Activated CD4-positive, alpha-beta memory T cell treated with anti-CD3 and anti-CD28 coated beads for 36 hours (primary cell): ENCODE measurements at regions of chr4 and their contacts with region 1.

Region 1: DNA sequence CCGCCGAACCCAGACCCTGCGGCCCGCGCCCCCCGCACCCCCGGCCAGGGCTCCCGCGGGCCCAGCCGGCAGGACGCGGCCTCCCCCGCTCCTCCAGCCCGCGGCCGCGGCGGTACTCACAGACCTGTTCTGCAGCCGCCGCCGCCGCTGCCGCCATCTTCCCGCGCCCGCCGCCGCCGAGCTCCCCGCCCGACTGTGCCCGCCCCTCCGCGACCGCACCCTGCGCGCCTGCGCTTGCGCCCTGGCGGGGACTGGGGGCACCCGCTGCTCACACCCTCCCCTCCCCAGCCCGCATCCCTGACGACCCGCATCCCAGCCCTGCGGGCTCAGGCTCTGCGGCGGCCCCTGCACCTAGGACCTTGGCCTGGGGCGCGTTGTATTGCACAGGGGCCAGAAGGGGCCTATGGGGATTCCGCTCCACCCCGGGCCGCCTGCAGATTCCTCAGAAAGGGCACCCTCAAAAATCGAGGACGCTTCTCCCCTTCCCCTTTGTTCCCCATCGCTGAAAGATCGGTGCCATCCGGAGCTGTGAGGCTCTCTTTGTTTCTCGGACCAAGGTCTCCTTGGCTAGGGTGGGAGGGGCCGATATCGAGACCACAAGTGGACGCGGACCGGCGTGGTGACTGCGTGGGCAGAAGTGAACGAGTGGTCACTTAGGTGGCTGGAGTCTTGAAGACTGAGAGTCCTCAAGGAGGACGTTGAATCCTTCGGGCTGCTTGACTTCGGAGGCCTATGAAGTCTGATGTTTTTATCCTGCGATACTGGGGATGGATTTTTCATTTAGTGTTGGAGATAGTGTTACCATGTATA is at the start of gene SGCB:
- DNase-seq: peak; percentile 78
- H3K4me3 Mint-ChIP-seq: peak within 1 kb of the TSS; percentile 81
- H3K27ac Mint-ChIP-seq: no peak within 1 kb of the TSS
- H3K4me1 Mint-ChIP-seq: peaks cover 25% of the 10 kb centered on the region
- H3K27me3 Mint-ChIP-seq: peaks cover 11% of the 10 kb centered on the region
- total RNA-seq, gene SGCB: 13.9 to 14.3 TPM

Region 2: GRCh38 chr4:51906167-51906958 is 131.9 kb before region 1 on chr4:
- CTCF ChIA-PET with region 1: no interaction called
- POLR2A ChIA-PET with region 1: no interaction called
- intact Hi-C with region 1: loop called (anchors 5 kb)
- DNase-seq: peak; percentile 22
- H3K4me3 Mint-ChIP-seq: no peak overlapping the region
- H3K27ac Mint-ChIP-seq: no peak overlapping the region
- H3K4me1 Mint-ChIP-seq: peaks cover 2% of the 10 kb centered on the region
- H3K27me3 Mint-ChIP-seq: no peaks in the 10 kb centered on the region

Region 3: GRCh38 chr4:51997647-51998046 is 40.7 kb before region 1 on chr4:
- CTCF ChIA-PET with region 1: no interaction called
- POLR2A ChIA-PET with region 1: no interaction called
- intact Hi-C with region 1: no loop called
- DNase-seq: no peak
- H3K4me3 Mint-ChIP-seq: no peak overlapping the region
- H3K27ac Mint-ChIP-seq: no peak overlapping the region
- H3K4me1 Mint-ChIP-seq: no peaks in the 10 kb centered on the region
- H3K27me3 Mint-ChIP-seq: no peaks in the 10 kb centered on the region

Region 4: DNA sequence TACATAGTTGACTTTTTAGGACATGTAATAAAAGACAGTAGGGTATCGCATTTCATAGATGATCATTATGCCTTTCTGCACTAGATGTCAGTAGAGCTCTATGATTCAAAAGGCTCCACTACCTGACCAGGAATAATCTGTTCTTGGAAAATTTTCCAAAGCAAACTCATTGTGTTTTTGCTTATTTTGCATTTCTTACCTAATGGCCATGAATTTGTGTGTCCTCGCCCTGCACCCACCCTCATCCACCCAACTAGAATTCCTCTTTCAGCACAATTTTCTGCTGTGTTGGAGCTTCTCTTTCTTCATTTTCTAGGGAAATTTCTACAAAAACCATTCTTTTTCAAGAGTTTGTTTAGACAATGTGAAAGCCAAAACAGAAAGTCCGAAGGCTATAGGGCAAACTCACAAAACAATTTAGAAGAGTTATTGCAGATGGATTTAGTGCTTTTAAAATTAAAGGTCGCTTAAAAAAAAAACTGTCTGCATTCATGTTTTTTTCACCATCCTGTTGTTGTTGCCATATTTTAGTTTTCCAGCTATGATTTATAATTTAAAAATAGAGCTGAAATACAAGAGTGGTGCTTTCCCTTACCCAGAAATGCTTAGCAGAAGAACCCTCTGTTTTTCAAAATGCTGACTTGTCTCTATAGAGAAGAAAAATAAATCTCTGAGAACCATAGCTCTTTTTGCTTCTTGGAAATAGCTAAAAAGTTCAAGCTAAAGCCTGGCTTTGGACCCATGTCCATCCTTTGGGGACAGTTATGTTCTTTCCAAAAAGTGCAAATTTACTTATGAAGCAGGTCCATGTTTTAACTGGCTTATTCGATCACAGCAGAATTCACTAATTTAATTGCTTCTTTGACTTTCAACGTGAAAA is 196.5 kb after region 1 on chr4:
- CTCF ChIA-PET with region 1: no interaction called
- POLR2A ChIA-PET with region 1: no interaction called
- intact Hi-C with region 1: no loop called
- DNase-seq: no peak
- H3K4me3 Mint-ChIP-seq: no peak overlapping the region
- H3K27ac Mint-ChIP-seq: no peak overlapping the region
- H3K4me1 Mint-ChIP-seq: no peaks in the 10 kb centered on the region
- H3K27me3 Mint-ChIP-seq: no peaks in the 10 kb centered on the region